WTC11 (cell line): ENCODE measurements at regions of chr15 and their contacts with region 1.

Region 1: DNA sequence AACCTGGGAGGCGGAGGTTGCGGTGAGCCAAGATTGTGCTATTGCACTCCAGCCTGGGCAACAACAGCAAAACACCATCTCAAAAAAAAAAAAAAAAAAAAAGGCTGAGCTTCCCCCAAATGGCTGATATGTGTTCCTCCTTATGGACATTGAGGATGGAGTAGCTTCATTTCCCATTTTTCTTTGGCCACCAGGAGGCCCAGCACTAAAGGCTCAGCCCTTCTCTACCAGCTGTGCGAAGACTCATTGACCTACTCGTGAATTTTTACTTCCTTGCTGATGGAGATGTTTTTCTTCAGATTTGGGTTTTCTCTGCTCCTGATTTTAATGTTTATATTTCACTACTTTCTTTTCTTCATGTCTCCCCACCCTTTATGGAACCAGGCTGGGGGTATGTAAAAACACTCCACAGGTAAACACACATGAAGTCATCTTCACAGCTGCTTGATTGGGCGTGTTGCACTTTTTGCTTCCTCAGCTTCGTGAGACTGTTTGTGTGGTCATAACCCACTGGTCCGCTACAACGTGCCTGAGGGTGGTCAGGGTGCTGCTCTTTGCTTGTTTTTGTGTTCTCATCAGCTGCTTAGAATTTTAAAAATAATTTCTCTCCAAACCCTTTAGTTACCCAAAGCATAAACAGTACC is 13.5 kb downstream of the SEMA4B start:
- DNase-seq: no peak
- ATAC-seq: peak; percentile 43; the same call in 1 of the 2 replicates
- H3K4me3 Mint-ChIP-seq: no peak overlapping the region
- H3K27ac Mint-ChIP-seq: no peak overlapping the region
- H3K4me1 Mint-ChIP-seq: peaks cover 12% of the 10 kb centered on the region
- H3K27me3 Mint-ChIP-seq: no peaks in the 10 kb centered on the region
- CTCF ChIP-seq: no peak

Region 2: GRCh38 chr15:90151989-90152645 is 62.6 kb before region 1 on chr15:
- CTCF ChIA-PET with region 1: interaction called, 12 read pairs
- POLR2A ChIA-PET with region 1: interaction called, 3 read pairs
- DNase-seq: peak; percentile 70
- ATAC-seq: peak; percentile 94
- H3K4me3 Mint-ChIP-seq: peak overlapping the region; percentile 10
- H3K27ac Mint-ChIP-seq: peak overlapping the region; percentile 97
- H3K4me1 Mint-ChIP-seq: peaks cover 42% of the 10 kb centered on the region
- H3K27me3 Mint-ChIP-seq: peaks cover 13% of the 10 kb centered on the region
- CTCF ChIP-seq: no peak

Region 3: DNA sequence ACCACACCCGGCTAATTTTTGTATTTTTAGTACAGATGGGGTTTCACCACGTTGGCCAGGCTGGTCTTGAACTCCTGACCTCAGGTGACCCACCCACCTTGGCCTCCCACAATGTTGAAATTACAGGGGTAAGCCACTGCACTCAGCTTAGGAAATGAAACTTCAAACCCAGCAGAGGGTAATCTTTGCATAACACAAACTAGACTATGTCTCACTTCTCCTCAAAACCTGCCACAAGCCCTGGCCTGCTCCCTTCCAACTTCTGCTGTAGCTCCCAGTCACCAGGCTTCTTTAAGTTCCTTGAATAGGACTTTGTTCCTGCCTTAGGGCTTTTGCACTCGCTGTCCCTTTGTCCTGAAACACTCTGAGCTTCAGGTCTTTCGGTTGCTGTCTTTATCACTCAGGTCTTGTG is 52.7 kb before region 1 on chr15:
- CTCF ChIA-PET with region 1: interaction called, 17 read pairs
- POLR2A ChIA-PET with region 1: interaction called, 6 read pairs
- DNase-seq: no peak
- ATAC-seq: no peak
- H3K4me3 Mint-ChIP-seq: no peak overlapping the region
- H3K27ac Mint-ChIP-seq: peak overlapping the region; percentile 57; the same call in 1 of the 2 replicates
- H3K4me1 Mint-ChIP-seq: peaks cover 50% of the 10 kb centered on the region
- H3K27me3 Mint-ChIP-seq: no peaks in the 10 kb centered on the region
- CTCF ChIP-seq: no peak

Region 4: DNA sequence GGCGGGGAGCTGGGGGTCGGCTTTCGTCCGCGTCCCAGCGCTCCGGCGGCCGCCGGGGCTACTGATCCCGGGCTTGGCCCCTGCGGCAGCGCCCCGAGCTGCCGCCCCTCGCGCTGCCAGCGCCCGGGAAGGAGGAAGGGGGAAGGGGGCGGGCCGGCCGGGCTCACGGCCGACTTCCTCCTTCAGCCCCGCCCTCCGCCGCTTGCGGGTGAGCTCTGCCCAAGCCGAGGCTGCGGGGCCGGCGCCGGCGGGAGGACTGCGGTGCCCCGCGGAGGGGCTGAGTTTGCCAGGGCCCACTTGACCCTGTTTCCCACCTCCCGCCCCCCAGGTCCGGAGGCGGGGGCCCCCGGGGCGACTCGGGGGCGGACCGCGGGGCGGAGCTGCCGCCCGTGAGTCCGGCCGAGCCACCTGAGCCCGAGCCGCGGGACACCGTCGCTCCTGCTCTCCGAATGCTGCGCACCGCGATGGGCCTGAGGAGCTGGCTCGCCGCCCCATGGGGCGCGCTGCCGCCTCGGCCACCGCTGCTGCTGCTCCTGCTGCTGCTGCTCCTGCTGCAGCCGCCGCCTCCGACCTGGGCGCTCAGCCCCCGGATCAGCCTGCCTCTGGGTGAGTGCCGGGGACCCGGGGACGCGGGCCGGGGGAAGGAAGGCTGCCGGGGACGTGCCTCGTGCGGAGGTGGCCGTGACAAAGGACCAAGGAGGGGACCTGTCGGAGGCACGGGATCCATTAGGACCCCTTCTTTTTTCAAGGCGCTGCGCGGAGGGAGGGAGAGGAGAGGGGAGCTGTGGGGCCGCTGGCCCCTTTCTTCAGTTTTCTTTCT is 13.3 kb before region 1 on chr15 and contains the start of gene SEMA4B:
- CTCF ChIA-PET with region 1: interaction called, 62 read pairs
- POLR2A ChIA-PET with region 1: interaction called, 4 read pairs
- DNase-seq: peak; percentile 83
- ATAC-seq: peak; percentile 86
- H3K4me3 Mint-ChIP-seq: peak within 1 kb of the TSS; percentile 78
- H3K27ac Mint-ChIP-seq: peak within 1 kb of the TSS; percentile 60
- H3K4me1 Mint-ChIP-seq: peaks cover 20% of the 10 kb centered on the region
- H3K27me3 Mint-ChIP-seq: no peaks in the 10 kb centered on the region; the same call in 1 of the 2 replicates
- CTCF ChIP-seq: no peak
- total RNA-seq, gene SEMA4B: 50.1 to 53.3 TPM (median 50.2 TPM) in 3 replicates

Region 5: DNA sequence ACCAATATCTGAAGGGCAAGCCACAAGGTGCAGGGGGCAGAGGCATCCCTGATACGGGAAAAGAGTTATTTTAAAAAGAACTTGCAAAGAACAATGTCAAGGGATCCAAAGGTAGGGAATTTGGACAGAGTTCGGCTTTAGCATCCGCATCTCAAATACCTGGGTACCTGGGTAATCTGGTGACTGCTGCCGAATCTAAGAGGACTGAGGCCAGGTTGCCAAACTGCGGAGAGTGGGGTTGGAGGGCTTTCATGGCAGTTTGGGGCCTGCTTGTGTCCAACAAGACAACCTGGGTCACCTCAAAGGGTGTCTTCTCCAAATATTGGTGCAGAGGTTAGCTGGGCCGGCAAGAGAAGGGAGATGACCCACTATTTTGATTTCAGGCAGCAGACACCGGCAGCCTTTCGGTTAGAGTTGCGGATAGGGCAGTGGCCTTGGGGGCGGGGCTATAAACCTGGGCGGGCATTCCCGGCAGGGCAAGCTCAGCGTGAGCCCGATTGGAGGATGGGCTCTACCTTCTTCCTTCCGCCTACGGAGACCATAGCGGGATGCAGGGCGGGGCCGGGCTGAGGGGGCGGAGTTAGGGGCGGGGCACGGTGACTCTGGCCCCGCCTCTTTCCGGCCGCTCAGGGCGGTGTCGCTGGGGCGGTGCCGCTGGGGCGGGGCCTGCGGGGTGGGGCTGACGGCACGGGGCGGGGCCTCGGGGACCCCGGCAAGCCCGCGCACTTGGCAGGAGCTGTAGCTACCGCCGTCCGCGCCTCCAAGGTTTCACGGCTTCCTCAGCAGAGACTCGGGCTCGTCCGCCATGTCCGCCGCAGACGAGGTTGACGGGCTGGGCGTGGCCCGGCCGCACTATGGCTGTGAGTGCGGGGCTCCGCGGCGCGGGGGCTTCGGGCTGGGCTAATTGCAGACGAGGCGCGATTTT is 173.1 kb after region 1 on chr15 and contains the start of gene IQGAP1:
- CTCF ChIA-PET with region 1: no interaction called
- POLR2A ChIA-PET with region 1: no interaction called
- DNase-seq: peak; percentile 99
- ATAC-seq: peak; percentile 94
- H3K4me3 Mint-ChIP-seq: peak within 1 kb of the TSS; percentile 83
- H3K27ac Mint-ChIP-seq: peak within 1 kb of the TSS; percentile 89
- H3K4me1 Mint-ChIP-seq: peaks cover 39% of the 10 kb centered on the region
- H3K27me3 Mint-ChIP-seq: no peaks in the 10 kb centered on the region
- CTCF ChIP-seq: no peak
- total RNA-seq, gene IQGAP1: 83.0 to 106 TPM (median 86.8 TPM) in 3 replicates